ENCODE measurements at regions of chr1 and their contacts with region 1.

Region 1: GRCh38 chr1:224513787-224514209 is 79.2 kb upstream of the WDR26 start:
- DNase-seq: peak; percentile 83 to 90 (median 86)
- ATAC-seq: peak; percentile 95
- H3K4me3 ChIP-seq: no peak overlapping the region
- H3K27ac ChIP-seq: no peak overlapping the region
- H3K4me1 ChIP-seq: no peaks in the 10 kb centered on the region
- H3K27me3 ChIP-seq: no peaks in the 10 kb centered on the region
- CTCF ChIP-seq: peak; percentile 79 to 98 (median 96)
- POLR2A ChIP-seq: no peak

Region 2: GRCh38 chr1:224472806-224473205 is 41.0 kb before region 1 on chr1:
- intact Hi-C with region 1: no loop called
- DNase-seq: no peak
- ATAC-seq: no peak
- H3K4me3 ChIP-seq: no peak overlapping the region
- H3K27ac ChIP-seq: no peak overlapping the region
- H3K4me1 ChIP-seq: no peaks in the 10 kb centered on the region
- H3K27me3 ChIP-seq: no peaks in the 10 kb centered on the region
- CTCF ChIP-seq: no peak
- POLR2A ChIP-seq: no peak

Region 3: DNA sequence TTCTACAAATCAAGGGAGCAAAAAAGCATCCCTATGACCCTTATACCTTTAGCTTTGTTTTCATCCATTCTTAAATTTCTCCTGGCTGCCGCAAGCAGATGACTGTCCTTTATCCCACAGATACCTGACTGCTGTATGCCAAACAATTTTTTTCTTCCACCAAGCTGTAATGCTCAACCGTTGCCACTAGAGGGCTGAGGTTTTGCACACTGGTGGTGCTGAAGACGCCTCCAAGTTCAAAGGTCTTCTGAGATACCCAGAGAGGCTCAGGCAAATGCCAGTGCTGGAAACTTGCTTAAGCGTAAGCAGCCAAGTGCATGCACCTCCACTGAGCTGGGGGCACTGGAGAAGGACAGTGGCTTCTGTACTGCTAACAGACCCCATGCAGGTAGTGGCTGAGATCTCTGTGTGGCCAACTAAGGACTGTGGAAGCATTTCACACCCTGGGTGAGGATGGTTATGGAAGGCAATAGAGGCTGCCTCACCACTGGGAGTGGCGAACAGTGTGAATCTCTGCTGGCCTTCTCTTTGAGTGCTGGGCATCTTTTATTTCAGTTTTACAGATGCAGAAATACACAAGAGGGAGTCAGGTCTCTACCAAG is 130.9 kb after region 1 on chr1:
- intact Hi-C with region 1: loop called (anchors 10 kb)
- DNase-seq: peak; percentile 46 to 62 (median 54)
- ATAC-seq: peak; percentile 45
- H3K4me3 ChIP-seq: no peak overlapping the region
- H3K27ac ChIP-seq: no peak overlapping the region
- H3K4me1 ChIP-seq: peaks cover 32% of the 10 kb centered on the region
- H3K27me3 ChIP-seq: no peaks in the 10 kb centered on the region
- CTCF ChIP-seq: peak; percentile 56 to 95 (median 81)
- POLR2A ChIP-seq: no peak

Region 4: DNA sequence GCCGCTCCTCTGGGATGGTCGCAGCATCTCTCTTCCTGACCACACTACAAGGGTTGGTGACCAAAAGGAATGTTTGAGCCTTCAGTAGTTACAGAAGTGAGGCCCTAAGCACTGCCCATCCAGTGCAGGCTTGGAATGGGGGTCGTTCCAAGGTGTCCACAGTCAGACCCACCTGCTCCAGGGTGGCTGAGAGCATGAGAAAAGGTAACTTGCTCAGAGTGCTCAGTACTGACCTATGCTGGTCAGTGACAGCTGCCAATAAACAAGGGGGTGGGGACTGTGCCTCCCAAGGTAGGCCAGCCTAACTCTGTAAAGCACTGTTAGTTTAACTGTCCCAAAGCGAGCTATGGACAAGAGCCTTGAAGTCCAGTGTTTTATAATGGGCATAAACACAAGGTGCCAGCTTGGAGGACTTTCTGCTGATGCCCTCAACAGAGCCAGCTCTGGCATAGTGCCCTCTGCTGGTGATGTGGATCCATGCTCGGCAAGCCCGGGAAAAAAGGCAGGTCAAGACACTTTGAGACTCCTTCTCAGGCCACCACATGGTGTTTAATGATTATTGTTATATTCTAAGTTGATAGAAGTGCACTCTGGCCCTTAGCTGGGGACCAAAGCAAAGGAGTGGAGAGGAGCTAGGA is 337.5 kb after region 1 on chr1:
- intact Hi-C with region 1: loop called (anchors 10 kb)
- DNase-seq: peak; percentile 74 to 78 (median 76)
- ATAC-seq: peak; percentile 64
- H3K4me3 ChIP-seq: no peak overlapping the region
- H3K27ac ChIP-seq: peak overlapping the region; percentile 36 to 77 (median 61)
- H3K4me1 ChIP-seq: peaks cover 22% of the 10 kb centered on the region
- H3K27me3 ChIP-seq: no peaks in the 10 kb centered on the region
- CTCF ChIP-seq: peak; percentile 28 to 59 (median 54)
- POLR2A ChIP-seq: no peak